ENCODE measurements at regions of chr17 and their contacts with region 1.

Region 1: DNA sequence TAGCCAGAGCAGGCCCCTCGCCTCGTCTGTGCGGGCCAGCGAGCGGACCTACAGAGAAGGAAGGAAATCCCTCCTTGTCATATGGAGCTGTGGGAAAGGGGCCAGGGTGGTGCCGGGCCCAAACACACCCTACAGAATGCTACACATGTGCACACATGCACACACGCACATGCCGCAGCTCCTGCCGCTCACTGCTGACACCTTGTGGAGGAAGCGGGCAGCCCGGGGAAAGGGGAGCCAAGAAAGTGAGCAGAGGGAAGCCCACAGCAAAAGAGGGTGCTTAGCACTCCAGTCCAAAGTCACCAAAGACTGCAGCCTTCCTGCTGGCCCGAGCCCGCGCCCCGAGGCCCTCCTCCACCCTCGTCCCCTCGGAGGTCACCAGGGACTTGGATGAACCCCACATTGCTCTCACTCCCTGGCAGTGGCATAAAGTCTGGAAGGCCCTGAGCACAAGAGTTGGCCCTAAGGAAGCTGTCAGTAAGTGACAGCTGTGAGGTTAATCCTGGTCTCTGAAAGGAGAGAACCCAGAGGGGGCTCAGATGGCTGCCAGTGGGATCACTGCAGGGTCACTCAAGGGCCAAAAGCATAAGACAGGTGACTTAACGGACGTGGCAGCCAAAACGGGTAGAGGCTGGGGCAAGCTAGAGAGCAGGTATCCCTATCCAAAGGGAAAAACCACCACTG is 68.2 kb downstream of the MYO18A start:
- DNase-seq: no peak
- H3K4me3 ChIP-seq: no peak overlapping the region
- H3K27ac ChIP-seq: no peak overlapping the region
- H3K4me1 ChIP-seq: peaks cover 6% of the 10 kb centered on the region
- H3K27me3 ChIP-seq: no peaks in the 10 kb centered on the region
- CTCF ChIP-seq: peak; percentile 47 to 85 (median 60)
- POLR2A ChIP-seq: no peak

Region 2: DNA sequence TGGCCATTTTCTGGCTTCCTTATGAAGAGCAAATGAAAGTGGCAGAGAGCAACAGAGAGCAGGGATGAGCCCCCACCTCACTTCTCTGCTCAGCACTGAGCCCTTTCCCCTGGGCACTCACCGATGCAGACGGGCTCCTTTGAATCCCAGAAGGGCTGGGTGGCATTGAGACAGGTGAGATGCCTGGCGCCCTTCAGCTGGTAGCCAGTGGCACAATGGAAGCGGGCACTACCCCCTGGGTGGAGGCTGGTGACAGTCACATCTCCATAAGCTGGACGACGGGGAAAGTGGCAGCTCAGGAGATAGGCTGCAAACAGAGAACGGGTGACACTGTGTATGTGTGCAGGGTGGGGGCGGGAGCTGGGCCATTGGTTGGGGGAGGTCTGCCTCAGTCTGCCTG is 148.1 kb before region 1 on chr17:
- intact Hi-C with region 1: loop called (anchors 2 kb)
- DNase-seq: no peak
- H3K4me3 ChIP-seq: no peak overlapping the region
- H3K27ac ChIP-seq: no peak overlapping the region
- H3K4me1 ChIP-seq: no peaks in the 10 kb centered on the region
- H3K27me3 ChIP-seq: no peaks in the 10 kb centered on the region
- CTCF ChIP-seq: no peak
- POLR2A ChIP-seq: no peak

Measured in vagina (tissue), 2 donors.